HEK293 (cell line): ENCODE measurements at regions of chr16 and their contacts with region 1.

Region 1: DNA sequence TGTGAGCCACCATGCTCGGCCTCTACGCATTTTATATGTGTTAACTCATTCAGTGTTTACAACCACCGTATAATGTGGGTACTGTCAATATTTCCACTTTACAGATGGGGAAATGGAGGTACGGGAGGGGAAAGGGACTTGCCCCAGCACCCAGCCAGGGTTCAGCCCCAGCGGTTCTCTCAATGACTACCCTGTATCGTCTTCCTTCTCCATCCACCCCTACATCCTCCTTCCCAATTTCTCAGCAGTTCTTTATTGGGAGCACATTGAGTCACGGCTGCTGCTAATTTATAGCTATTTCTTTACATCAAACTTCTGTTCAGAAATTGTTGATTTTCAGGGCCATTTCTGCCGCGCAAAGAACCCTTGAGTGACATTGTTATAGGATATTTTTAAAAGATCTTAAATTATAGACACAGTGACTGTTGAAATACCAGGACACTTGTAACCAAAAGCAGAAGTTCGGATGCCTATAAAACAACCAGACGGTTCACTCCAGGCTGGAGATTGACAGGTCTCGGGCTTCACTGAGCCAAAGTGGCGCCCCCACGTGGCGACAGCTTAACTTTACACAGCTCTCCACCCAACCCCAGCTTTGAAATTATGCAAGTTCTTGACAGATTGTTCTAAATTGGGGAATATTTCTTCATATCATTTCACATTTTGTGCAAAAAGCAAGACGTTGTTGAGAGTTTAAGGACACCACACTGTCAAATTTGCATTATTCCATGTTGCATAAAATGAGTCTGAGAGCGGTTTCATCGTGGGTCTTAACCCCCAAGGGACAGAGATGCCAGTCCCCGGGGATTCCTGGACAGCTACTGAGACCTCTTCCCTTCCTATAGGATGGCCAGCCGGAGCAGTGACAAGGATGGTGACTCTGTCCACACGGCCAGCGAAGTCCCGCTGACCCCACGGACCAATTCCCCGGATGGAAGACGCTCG is 11.8 kb downstream of the SYT17 start:
- H3K4me3 ChIP-seq: no peak overlapping the region
- H3K27ac ChIP-seq: no peak overlapping the region
- H3K4me1 ChIP-seq: no peaks in the 10 kb centered on the region
- CTCF ChIP-seq: no peak

Region 2: GRCh38 chr16:19118938-19119431 is 60.8 kb before region 1 on chr16:
- CTCF ChIA-PET with region 1: interaction called, 10 read pairs
- POLR2A ChIA-PET with region 1: no interaction called
- H3K4me3 ChIP-seq: peak overlapping the region; percentile 7; the same call in 1 of the 2 replicates
- H3K27ac ChIP-seq: 0 out of 2 replicates have a peak overlapping the region, but pooled peaks have one; percentile 25
- H3K4me1 ChIP-seq: peaks cover 9% of the 10 kb centered on the region; the same call in 1 of the 2 replicates
- CTCF ChIP-seq: no peak

Region 3: DNA sequence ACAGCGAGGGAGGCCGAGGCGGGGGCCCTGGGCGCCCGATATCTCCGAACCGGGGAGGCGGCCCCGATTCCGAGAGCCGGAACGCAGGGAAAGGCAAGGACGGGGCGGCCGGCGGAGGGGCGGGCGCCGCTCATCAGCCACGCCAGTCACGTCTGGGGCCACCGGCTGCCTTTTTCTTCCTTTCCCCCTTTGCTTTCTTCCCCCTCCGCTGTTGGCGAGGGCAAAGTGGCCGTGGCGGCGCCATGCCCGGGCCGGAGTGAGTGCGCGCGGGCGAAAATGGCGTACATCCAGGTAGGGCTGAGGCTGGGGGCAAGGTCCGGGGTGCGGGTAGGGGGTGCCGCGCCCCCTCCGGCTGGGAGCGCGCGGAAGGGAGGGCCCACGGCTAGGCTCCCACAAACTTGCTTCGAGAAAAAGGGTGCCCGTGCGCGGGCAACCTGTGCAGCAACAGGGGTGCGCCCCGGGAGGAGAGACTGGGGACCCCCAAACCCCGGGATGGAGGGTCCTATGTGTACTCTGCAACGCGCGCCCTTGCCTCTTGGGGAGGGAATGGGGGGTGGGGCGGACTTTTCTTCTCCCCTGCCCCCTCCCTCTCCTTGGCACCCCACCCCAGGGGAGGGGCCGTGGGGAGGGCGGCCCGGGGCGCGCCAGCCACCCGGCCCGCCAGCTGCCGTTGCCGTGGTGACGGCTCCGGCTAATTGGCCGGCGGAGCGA is 11.3 kb before region 1 on chr16:
- CTCF ChIA-PET with region 1: interaction called, 10 read pairs
- POLR2A ChIA-PET with region 1: no interaction called
- H3K4me3 ChIP-seq: peak overlapping the region; percentile 54
- H3K27ac ChIP-seq: no peak overlapping the region; the same call in 1 of the 2 replicates
- H3K4me1 ChIP-seq: no peaks in the 10 kb centered on the region
- CTCF ChIP-seq: peak; percentile 6; the same call in 1 of the 2 replicates

Region 4: DNA sequence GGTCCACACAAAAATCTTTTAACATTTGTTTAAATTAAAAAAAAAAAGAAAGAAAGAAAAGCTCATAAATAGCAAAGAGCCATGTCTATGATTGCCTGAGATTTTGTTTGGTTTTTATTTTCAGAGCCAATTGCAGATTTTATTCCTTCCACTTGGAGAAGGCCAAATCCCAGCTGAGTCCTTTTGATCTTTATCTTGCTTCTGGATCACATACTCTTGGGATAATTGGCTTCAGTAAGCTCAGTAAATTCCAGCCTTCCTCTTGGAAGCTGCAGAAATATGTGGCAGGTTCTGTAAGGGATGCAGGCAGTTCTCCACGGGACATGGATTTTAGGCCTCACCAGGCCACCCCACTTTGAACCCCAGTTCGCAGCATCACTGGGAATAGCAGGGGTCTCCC is 174.6 kb after region 1 on chr16:
- CTCF ChIA-PET with region 1: interaction called, 10 read pairs
- POLR2A ChIA-PET with region 1: no interaction called
- H3K4me3 ChIP-seq: no peak overlapping the region
- H3K27ac ChIP-seq: no peak overlapping the region
- H3K4me1 ChIP-seq: no peaks in the 10 kb centered on the region
- CTCF ChIP-seq: no peak